Esophagus muscularis mucosa (tissue), 4 donors: ENCODE measurements at regions of chr5 and their contacts with region 1.

Region 1: GRCh38 chr5:91383027-91383955 is at the start of gene ARRDC3:
- DNase-seq: peak; percentile 99
- H3K4me3 ChIP-seq: peak within 1 kb of the TSS; percentile 69 to 85 (median 71)
- H3K27ac ChIP-seq: peak within 1 kb of the TSS; percentile 90 to 99 (median 94)
- H3K4me1 ChIP-seq: peaks cover 9 to 22% (median 18%) of the 10 kb centered on the region in 4 donors
- H3K27me3 ChIP-seq: no peaks in the 10 kb centered on the region
- CTCF ChIP-seq: no peak
- EP300 ChIP-seq: no peak
- POLR2A ChIP-seq: peak; percentile 98
- total RNA-seq, gene ARRDC3: 37.0 to 58.2 (median 43.1) TPM

Region 2: GRCh38 chr5:91101600-91102379 is 281.5 kb before region 1 on chr5:
- intact Hi-C with region 1: loop called (anchors 1 kb)
- DNase-seq: no peak
- H3K4me3 ChIP-seq: no peak overlapping the region
- H3K27ac ChIP-seq: no peak overlapping the region
- H3K4me1 ChIP-seq: peaks cover 0 to 32% (median 25%) of the 10 kb centered on the region in 4 donors
- H3K27me3 ChIP-seq: no peaks in the 10 kb centered on the region
- CTCF ChIP-seq: peak; percentile 84 to 90 (median 84)
- EP300 ChIP-seq: no peak
- POLR2A ChIP-seq: no peak

Region 3: DNA sequence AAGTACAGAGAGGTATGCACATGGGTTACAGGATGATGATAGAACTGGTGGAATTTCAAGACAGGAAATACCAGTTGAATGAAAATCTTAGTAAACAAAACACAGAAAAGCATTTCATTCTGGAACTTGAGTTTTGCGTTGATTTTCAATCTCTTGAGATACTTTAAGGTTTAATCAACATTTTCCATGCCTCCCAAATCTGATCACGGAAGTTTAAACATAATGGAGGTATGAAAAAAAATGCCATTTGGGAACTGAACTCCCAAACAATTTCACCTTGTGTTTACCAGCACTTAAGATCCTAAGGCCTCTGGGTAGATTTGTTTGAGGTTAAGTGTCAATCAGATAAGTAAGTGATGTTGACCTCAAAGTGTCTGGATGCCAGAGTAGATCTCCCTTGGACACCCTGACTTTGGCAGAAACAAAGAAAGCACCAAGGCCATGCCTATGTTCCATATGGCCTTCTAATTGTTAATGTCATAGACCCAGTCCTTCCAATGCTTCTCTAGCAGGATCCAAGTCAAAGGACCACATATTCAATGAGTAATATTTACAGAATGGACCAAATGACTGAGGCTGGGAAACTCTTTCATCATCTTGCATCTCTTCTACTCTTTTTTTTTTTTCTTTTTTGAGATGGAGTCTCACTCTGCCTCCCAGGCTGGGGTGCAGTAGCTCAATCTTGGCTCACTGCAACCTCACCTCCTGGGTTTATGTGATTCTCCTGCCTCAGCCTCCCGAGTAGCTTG is 217.1 kb before region 1 on chr5:
- intact Hi-C with region 1: loop called (anchors 5 kb)
- DNase-seq: no peak
- H3K4me3 ChIP-seq: no peak overlapping the region
- H3K27ac ChIP-seq: peak overlapping the region in 1 of 4 donors; percentile 6
- H3K4me1 ChIP-seq: peaks cover 16 to 51% (median 43%) of the 10 kb centered on the region in 4 donors
- H3K27me3 ChIP-seq: no peaks in the 10 kb centered on the region
- CTCF ChIP-seq: no peak
- EP300 ChIP-seq: no peak
- POLR2A ChIP-seq: no peak

Region 4: DNA sequence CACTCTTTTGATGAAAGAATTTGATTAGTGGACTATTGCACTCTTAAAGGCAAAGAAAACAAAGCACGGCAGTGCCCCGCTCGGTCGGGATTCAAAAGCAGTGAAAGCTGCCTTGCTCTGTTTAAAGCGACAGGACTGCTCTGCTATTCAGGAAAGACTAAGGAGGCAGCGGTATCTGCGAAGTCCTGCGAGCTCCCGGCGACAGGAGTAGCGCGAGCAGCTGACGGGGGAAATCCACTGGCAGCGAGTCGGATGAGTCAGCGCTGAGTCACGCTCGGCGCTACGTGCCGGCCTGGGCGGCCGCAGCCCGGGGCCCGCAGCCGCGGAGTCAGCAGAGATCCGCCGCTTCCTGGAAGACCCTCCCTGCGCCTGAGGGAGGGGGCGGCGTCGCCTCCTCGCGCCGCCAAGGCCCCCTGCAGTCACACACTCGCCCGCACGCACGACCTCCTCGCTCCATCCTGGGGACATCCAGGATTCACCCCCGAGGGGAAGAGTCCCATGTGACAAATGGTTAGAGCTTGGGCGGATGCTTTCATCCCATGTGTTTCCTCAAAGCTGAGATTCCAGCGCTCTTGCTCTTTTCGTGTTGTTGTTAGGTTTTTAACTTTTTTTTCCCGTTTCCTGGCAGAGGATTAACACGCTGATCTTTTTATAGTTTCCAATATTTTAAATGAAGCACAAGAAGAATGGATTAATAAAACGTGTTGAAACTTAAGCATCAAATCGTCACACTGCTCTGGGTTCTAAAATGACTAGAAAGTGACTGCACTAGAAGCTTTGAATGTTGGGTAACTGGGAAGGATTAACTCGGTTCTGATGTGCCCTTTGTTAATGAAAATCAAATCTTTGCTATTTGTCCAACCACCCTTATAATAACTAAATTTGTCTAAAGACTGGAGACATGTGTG is 102.7 kb before region 1 on chr5:
- intact Hi-C with region 1: loop called (anchors 2 kb)
- DNase-seq: peak; percentile 97
- H3K4me3 ChIP-seq: peak overlapping the region; percentile 61 to 71 (median 65)
- H3K27ac ChIP-seq: peak overlapping the region; percentile 89 to 95 (median 92)
- H3K4me1 ChIP-seq: peaks cover 3 to 46% (median 36%) of the 10 kb centered on the region in 4 donors
- H3K27me3 ChIP-seq: no peaks in the 10 kb centered on the region
- CTCF ChIP-seq: no peak
- EP300 ChIP-seq: peak; percentile 47
- POLR2A ChIP-seq: peak; percentile 57

Region 5: GRCh38 chr5:91332267-91333045 is 50.8 kb before region 1 on chr5:
- intact Hi-C with region 1: no loop called
- DNase-seq: no peak
- H3K4me3 ChIP-seq: no peak overlapping the region
- H3K27ac ChIP-seq: no peak overlapping the region
- H3K4me1 ChIP-seq: peaks cover 0 to 23% (median 22%) of the 10 kb centered on the region in 4 donors
- H3K27me3 ChIP-seq: no peaks in the 10 kb centered on the region
- CTCF ChIP-seq: no peak
- EP300 ChIP-seq: no peak
- POLR2A ChIP-seq: no peak